Posterior vena cava (tissue), 2 donors: ENCODE measurements at regions of chr11 and their contacts with region 1.

Region 1: GRCh38 chr11:7577291-7578190 is 63.7 kb downstream of the PPFIBP2 start:
- DNase-seq: no peak

Region 2: GRCh38 chr11:7651140-7651551 is 73.6 kb after region 1 on chr11:
- intact Hi-C with region 1: loop called in 1 of 2 experiments (anchors 5 kb)
- DNase-seq: no peak

Region 3: DNA sequence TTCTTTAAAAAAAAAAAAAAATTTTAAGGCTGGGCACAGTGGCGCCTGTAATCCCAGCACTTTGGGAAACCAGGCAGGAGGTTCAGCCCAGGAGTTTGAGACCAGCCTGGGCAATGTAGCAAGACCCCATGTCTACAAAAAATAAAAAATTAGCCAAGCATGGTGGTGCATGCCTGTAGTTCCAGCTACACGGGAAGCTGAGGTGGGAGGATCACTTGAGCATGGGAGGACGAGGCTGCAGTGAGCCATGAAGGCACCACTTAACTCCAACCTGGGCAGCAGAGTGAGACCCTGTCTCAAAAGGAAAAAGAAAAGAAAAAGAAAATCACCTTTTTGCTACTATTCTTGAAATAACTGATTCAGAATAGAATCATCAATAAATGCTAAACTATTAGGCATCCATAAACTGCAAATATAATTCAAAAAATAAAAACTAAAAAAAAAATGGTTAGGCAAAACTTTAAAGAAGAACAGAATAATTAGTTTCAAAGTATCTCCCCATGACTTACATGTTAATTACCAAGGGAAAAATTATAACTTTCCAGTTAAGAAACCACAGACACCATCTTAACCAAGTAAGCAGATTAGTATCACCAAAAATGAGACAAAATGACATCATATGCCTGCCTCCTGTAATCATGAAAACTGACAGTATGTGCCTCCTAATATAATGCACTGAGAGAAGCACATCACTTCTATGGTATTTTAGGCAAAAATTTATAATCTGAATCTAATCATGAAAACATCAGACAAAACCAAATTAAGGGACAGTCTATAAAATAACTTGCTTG is 1624.0 kb after region 1 on chr11:
- intact Hi-C with region 1: no loop called
- DNase-seq: no peak